Stomach (tissue), 19 donors: ENCODE measurements at regions of chr16 and their contacts with region 1.

Region 1: DNA sequence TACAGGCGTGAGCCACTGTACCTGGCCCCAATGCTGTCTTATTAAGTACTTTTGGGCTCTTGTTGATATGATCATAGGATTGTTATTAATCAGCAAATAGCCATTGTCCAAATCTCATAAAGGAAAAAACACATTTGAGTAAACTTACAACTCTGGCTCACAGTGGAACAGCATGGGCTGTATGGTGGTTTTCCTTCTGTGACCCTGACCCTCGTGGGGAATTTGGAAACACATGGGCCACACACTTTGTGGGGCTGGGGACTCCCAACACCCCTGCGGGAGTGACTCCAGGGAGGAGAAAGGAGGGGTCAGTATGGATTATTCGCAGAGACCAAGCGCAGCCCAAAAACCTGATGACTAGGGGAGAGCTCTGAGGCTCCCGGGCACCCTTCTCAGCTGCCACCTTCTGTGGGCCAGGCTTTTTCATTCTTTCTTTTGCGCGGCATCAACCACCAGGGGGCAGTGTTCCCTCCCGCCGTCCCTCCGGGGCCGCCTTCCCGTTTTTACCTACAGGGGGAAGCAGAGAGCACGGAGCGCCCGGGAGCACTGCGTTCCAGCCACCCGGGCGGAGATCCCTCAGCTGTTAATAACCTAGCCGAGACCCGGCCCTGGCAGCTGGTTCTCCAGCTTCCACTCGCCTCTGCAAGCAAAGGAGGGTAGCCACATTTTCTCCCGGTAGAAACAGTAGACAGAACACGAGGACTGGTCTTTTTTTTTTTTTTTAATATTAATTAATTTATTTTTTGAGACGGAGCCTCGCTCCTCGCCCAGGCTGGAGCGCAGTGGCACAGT is 9.7 kb downstream of the TSNAXIP1 start:
- DNase-seq: peak; percentile 92
- H3K4me3 ChIP-seq: no peak overlapping the region
- H3K27ac ChIP-seq: peak overlapping the region in 1 of 5 donors; percentile 20
- H3K4me1 ChIP-seq: peaks cover 0 to 9% (median 3%) of the 10 kb centered on the region in 4 donors
- H3K27me3 ChIP-seq: no peaks in the 10 kb centered on the region
- CTCF ChIP-seq: peak in 5 of 7 experiments; percentile 97 to 100 (median 99)
- EP300 ChIP-seq: no peak
- POLR2A ChIP-seq: no peak

Region 2: DNA sequence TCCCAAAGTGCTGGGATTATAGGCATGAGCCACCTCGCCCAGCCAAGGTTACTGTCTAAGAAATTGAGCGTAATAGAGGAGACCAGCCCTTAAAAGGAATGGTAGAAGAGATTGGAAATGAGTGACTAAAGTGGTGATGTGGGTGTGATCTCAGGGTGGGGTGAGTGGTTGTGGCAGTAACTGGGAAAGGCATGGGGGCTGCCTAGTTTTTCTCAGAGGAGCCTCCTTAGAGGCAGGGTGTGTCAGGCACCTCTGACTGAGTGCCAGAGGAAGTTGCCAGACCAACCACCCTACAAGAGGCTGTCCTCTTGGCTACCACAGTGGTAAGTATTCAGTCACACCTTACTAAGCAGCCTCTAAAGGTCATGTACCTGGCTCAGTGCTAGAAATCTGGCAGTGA is 215.5 kb after region 1 on chr16:
- intact Hi-C with region 1: loop called (anchors 10 kb)
- DNase-seq: no peak
- H3K4me3 ChIP-seq: no peak overlapping the region
- H3K27ac ChIP-seq: no peak overlapping the region
- H3K4me1 ChIP-seq: peaks cover 0 to under 1% (median 0%) of the 10 kb centered on the region in 4 donors
- H3K27me3 ChIP-seq: no peaks in the 10 kb centered on the region
- CTCF ChIP-seq: no peak
- EP300 ChIP-seq: no peak
- POLR2A ChIP-seq: no peak